IMR-90 (cell line): ENCODE measurements at regions of chr2 and their contacts with region 1.

Region 1: DNA sequence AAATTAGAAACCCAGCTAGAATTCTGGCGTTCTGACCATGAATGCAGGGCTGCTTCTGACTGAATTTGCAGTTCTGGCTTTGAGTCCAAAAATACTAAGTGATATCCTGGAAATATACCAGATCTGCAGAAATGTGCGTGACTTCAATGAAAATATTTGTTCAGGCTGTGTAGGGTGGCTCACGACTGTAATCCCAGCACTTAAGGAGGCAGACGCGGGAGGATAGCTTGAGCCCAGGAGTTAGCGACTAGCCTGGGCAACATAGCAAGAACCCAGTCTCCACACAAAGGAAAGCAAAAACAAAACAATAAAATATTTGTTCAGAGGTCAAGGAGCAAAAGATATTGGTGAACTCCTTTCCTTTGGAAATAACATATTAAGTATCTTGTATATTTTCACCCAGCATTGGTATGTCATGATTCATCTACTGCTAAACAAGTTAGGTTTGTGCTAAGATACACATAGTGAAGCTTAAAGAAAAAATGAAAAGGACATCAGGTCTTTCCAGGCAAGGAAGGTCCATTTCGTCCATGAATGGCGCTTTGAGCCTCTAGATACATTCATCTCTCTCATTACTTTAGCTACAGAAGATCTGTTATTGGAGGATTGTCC is 239.2 kb downstream of the CMPK2 start:
- DNase-seq: peak; percentile 72
- ATAC-seq: peak; percentile 91
- H3K4me3 ChIP-seq: no peak overlapping the region
- H3K27ac ChIP-seq: peak overlapping the region; percentile 78; the same call in 1 of the 2 replicates
- H3K4me1 ChIP-seq: peaks cover 10% of the 10 kb centered on the region
- H3K27me3 ChIP-seq: no peaks in the 10 kb centered on the region
- CTCF ChIP-seq: no peak
- POLR2A ChIP-seq: no peak
- RAD21 ChIP-seq: no peak

Region 2: GRCh38 chr2:6576302-6576701 is 50.2 kb before region 1 on chr2:
- CTCF ChIA-PET with region 1: no interaction called
- POLR2A ChIA-PET with region 1: no interaction called
- dilution Hi-C with region 1: no loop called
- in situ Hi-C with region 1: no loop called
- intact Hi-C with region 1: loop called (anchors 5 kb)
- DNase-seq: peak; percentile 87
- ATAC-seq: peak; percentile 84
- H3K4me3 ChIP-seq: no peak overlapping the region
- H3K27ac ChIP-seq: no peak overlapping the region; the same call in 1 of the 2 replicates
- H3K4me1 ChIP-seq: peaks cover 8% of the 10 kb centered on the region
- H3K27me3 ChIP-seq: no peaks in the 10 kb centered on the region
- CTCF ChIP-seq: no peak
- POLR2A ChIP-seq: no peak
- RAD21 ChIP-seq: no peak